ENCODE measurements at regions of chr10 and their contacts with region 1.

Region 1: GRCh38 chr10:79084012-79084971 is 15.5 kb downstream of the ZMIZ1 start:
- DNase-seq: peak; percentile 83
- ATAC-seq: 0 out of 2 replicates have a peak, but pooled peaks have one; percentile 2
- H3K4me3 ChIP-seq: no peak overlapping the region
- H3K27ac ChIP-seq: peak overlapping the region; percentile 78
- H3K4me1 ChIP-seq: peaks cover 69% of the 10 kb centered on the region
- H3K27me3 ChIP-seq: no peaks in the 10 kb centered on the region
- CTCF ChIP-seq: no peak
- POLR2A ChIP-seq: peak; percentile 41; the same call in 1 of the 2 replicates
- RAD21 ChIP-seq: no peak

Region 2: GRCh38 chr10:79096514-79096913 is 12.2 kb after region 1 on chr10:
- CTCF ChIA-PET with region 1: no interaction called
- POLR2A ChIA-PET with region 1: no interaction called
- dilution Hi-C with region 1: no loop called
- in situ Hi-C with region 1: no loop called
- intact Hi-C with region 1: no loop called
- DNase-seq: no peak
- ATAC-seq: no peak
- H3K4me3 ChIP-seq: no peak overlapping the region
- H3K27ac ChIP-seq: no peak overlapping the region
- H3K4me1 ChIP-seq: peaks cover 70% of the 10 kb centered on the region
- H3K27me3 ChIP-seq: no peaks in the 10 kb centered on the region
- CTCF ChIP-seq: no peak
- POLR2A ChIP-seq: no peak
- RAD21 ChIP-seq: no peak

Region 3: GRCh38 chr10:79127151-79127961 is 43.1 kb after region 1 on chr10:
- CTCF ChIA-PET with region 1: no interaction called
- POLR2A ChIA-PET with region 1: no interaction called
- dilution Hi-C with region 1: no loop called
- in situ Hi-C with region 1: no loop called
- intact Hi-C with region 1: loop called (anchors 5 kb)
- DNase-seq: peak; percentile 86
- ATAC-seq: peak; percentile 59
- H3K4me3 ChIP-seq: no peak overlapping the region
- H3K27ac ChIP-seq: peak overlapping the region; percentile 4; the same call in 1 of the 2 replicates
- H3K4me1 ChIP-seq: peaks cover 48% of the 10 kb centered on the region
- H3K27me3 ChIP-seq: no peaks in the 10 kb centered on the region
- CTCF ChIP-seq: no peak
- POLR2A ChIP-seq: no peak
- RAD21 ChIP-seq: peak; percentile 19

Region 4: DNA sequence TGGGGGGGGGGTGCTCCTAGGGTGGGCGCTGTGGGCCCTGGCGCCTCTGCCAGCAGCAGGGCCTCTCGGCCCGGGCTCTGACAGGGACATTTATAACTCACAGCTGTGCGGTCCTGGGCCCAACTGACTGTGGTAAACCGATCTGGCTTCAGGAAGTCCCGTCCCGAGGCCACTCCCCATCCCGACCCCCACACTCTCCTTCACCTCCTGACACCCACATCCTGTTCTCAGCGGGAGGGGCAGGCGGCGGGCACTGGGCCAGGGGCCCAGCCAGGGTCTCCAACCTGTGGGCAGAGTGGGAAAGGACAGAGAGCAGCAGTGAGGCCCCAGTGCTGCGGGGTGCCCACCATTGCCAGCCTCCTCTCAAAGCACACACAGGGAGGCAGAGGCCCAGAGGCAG is 53.5 kb after region 1 on chr10:
- CTCF ChIA-PET with region 1: no interaction called
- POLR2A ChIA-PET with region 1: no interaction called
- dilution Hi-C with region 1: no loop called
- in situ Hi-C with region 1: no loop called
- intact Hi-C with region 1: no loop called
- DNase-seq: peak; percentile 62
- ATAC-seq: peak; percentile 27
- H3K4me3 ChIP-seq: no peak overlapping the region
- H3K27ac ChIP-seq: peak overlapping the region; percentile 90
- H3K4me1 ChIP-seq: peaks cover 68% of the 10 kb centered on the region
- H3K27me3 ChIP-seq: no peaks in the 10 kb centered on the region
- CTCF ChIP-seq: no peak
- POLR2A ChIP-seq: no peak
- RAD21 ChIP-seq: no peak

Region 5: GRCh38 chr10:79185067-79185774 is 100.9 kb after region 1 on chr10:
- CTCF ChIA-PET with region 1: no interaction called
- POLR2A ChIA-PET with region 1: no interaction called
- dilution Hi-C with region 1: no loop called
- in situ Hi-C with region 1: loop called (anchors 5 kb)
- intact Hi-C with region 1: no loop called
- DNase-seq: peak; percentile 41
- ATAC-seq: peak; percentile 45
- H3K4me3 ChIP-seq: no peak overlapping the region
- H3K27ac ChIP-seq: peak overlapping the region; percentile 48
- H3K4me1 ChIP-seq: peaks cover 58% of the 10 kb centered on the region
- H3K27me3 ChIP-seq: no peaks in the 10 kb centered on the region
- CTCF ChIP-seq: no peak
- POLR2A ChIP-seq: no peak
- RAD21 ChIP-seq: no peak

Measured in IMR-90 (cell line).